Right cardiac atrium (tissue), 5 donors: ENCODE measurements at regions of chr2 and their contacts with region 1.

Region 1: GRCh38 chr2:165251366-165251765 is 12.2 kb downstream of the SCN2A start:
- DNase-seq: no peak
- ATAC-seq: no peak
- H3K4me3 ChIP-seq: no peak overlapping the region
- H3K27ac ChIP-seq: no peak overlapping the region
- H3K4me1 ChIP-seq: no peaks in the 10 kb centered on the region
- H3K27me3 ChIP-seq: no peaks in the 10 kb centered on the region

Region 2: DNA sequence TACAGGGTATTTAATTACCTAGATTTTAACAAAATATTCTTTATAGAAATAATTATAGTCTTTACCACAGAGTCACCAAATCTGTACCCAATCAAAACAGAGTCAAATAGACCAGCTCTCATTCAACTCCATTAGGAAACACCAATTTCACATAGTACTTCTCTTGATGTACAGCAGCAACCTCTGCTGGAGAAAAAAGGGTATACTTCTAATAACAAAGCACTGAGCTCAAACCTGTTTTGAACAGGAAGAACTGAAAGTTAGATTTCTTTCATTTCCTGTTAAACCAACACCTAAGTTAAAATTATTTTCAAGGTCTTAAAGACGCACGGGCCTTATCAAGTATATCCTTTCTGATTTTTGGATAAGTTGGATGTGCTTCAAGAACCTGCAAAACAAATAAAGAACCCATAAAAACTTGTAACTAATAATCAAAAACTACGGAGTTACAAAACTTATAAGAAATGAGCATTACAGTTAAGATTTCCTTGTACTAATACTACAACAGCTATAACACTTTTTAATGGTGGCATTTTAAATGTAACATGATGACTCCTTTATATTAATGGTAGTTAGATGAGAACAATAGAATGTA is 623.2 kb after region 1 on chr2:
- intact Hi-C with region 1: loop called in 1 of 4 experiments (anchors 10 kb)
- DNase-seq: no peak
- ATAC-seq: peak; percentile 61 to 71
- H3K4me3 ChIP-seq: no peak overlapping the region
- H3K27ac ChIP-seq: no peak overlapping the region
- H3K4me1 ChIP-seq: peaks cover 2% of the 10 kb centered on the region
- H3K27me3 ChIP-seq: no peaks in the 10 kb centered on the region